Activated CD8-positive, alpha-beta T cell treated with anti-CD3 and anti-CD28 coated beads, Interleukin-2, amount 10 ng/mL, durations not matched to agents 7 days and 5 days (primary cell): ENCODE measurements at regions of chr6 and their contacts with region 1.

Region 1: DNA sequence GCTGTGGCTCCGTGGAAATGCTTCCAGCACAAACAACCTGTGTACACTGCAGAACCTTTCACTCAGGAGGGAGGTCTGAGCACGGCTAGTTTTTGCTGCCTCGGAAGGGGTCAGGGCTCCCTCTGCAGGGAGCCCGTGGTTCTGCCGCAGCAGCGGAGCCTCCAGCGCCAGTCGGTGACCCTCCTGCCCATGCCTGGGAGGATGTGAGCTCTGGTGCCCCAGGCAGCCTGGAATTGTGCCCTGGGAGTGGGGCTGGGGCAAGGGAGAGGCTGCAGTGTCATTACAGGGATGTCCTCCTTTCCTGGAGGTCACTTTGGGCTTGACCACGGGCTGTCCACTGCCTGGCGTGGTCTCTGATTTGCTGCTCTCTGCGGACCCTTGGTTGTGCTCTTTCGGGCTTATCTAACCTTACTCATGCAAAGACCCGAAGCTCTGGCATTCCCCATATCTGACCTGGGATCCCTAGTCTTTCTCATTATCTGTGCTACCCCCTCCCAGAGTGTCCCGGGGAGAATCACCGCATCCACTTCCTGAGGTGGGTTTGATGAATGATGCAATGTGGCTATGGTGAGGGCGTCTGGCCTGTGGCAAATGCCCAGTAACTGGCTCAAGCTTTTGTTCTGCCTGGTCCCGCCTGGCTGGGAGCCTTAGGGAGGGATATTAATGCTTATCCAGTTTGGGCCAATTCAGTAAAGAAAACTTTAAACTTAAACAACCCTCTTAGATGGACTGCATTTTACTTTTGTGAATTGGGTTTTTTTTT is 59.6 kb upstream of the TAGAP start:
- DNase-seq: peak; percentile 87
- ATAC-seq: peak; percentile 59
- H3K4me3 Mint-ChIP-seq: peak overlapping the region; percentile 44
- H3K27ac Mint-ChIP-seq: peak overlapping the region; percentile 93
- H3K4me1 Mint-ChIP-seq: peaks cover 84% of the 10 kb centered on the region
- H3K27me3 Mint-ChIP-seq: no peaks in the 10 kb centered on the region

Region 2: DNA sequence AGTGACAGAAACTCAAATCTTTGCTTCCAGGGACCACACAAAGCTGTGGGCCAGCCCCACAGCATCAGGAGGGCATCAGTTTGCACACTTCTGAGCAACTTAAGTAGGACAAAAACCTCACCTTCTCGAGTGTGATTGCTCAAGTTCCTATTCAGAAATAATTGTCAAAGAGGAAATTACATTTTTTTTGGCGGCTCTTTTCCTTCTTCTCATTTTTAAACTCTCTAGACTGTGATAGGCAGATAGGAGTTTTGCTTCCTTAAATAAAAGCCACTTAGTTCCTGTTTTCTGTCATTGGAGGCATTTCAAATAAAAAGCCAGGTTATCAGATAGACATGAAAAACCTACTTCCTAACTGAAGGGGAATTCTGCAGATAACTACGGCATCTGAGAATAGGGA is 48.3 kb before region 1 on chr6:
- CTCF ChIA-PET with region 1: interaction called, 22 read pairs
- POLR2A ChIA-PET with region 1: interaction called, 5 read pairs
- DNase-seq: no peak
- ATAC-seq: peak; percentile 14
- H3K4me3 Mint-ChIP-seq: peak overlapping the region; percentile 4
- H3K27ac Mint-ChIP-seq: peak overlapping the region; percentile 56
- H3K4me1 Mint-ChIP-seq: peaks cover 81% of the 10 kb centered on the region
- H3K27me3 Mint-ChIP-seq: no peaks in the 10 kb centered on the region

Region 3: GRCh38 chr6:159084493-159085091 is 19.8 kb before region 1 on chr6:
- CTCF ChIA-PET with region 1: interaction called, 17 read pairs
- POLR2A ChIA-PET with region 1: no interaction called
- DNase-seq: no peak
- ATAC-seq: no peak
- H3K4me3 Mint-ChIP-seq: no peak overlapping the region
- H3K27ac Mint-ChIP-seq: no peak overlapping the region
- H3K4me1 Mint-ChIP-seq: peaks cover 25% of the 10 kb centered on the region
- H3K27me3 Mint-ChIP-seq: no peaks in the 10 kb centered on the region

Region 4: GRCh38 chr6:159349915-159350314 is 245.6 kb after region 1 on chr6:
- CTCF ChIA-PET with region 1: no interaction called
- POLR2A ChIA-PET with region 1: no interaction called
- DNase-seq: no peak
- ATAC-seq: no peak
- H3K4me3 Mint-ChIP-seq: no peak overlapping the region
- H3K27ac Mint-ChIP-seq: no peak overlapping the region
- H3K4me1 Mint-ChIP-seq: no peaks in the 10 kb centered on the region
- H3K27me3 Mint-ChIP-seq: peaks cover 5% of the 10 kb centered on the region

Region 5: GRCh38 chr6:159654483-159655098 is 550.2 kb after region 1 on chr6:
- CTCF ChIA-PET with region 1: no interaction called
- POLR2A ChIA-PET with region 1: no interaction called
- DNase-seq: no peak
- ATAC-seq: no peak
- H3K4me3 Mint-ChIP-seq: no peak overlapping the region
- H3K27ac Mint-ChIP-seq: no peak overlapping the region
- H3K4me1 Mint-ChIP-seq: no peaks in the 10 kb centered on the region
- H3K27me3 Mint-ChIP-seq: peaks cover 2% of the 10 kb centered on the region